ENCODE measurements at regions of chr4 and their contacts with region 1.

Region 1: DNA sequence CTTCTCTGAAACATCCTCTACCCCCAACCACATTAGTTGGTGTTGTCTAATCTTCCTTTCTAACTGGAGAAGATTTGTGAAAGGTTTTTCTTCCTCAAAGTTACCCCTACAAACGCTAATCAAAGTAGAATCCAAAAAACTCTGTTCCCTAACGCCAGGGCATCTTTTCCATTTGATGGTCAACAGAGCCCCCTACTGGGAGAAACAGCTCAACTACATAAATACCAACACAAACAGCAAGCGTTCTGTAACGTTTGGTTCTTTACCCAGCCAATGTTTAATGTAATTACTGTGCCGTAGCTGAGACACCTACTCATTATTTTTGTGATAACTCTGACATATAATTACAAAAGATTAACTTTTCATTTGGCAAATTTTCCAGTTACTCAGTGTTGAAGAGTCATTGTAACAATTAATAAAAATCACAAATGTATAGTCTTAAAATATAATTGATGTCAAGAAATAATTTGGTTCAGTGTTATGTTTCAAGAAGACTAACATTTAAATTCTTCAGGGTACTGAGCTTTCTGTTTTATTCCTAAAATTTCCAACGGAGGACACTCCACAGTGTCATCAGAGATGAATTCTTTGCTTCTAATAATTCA is 94.9 kb upstream of the TBC1D9 start:
- DNase-seq: peak; percentile 41
- ATAC-seq: peak; percentile 80; the same call in 1 of the 2 replicates
- H3K4me3 ChIP-seq: no peak overlapping the region
- H3K27ac ChIP-seq: no peak overlapping the region
- H3K4me1 ChIP-seq: no peaks in the 10 kb centered on the region
- H3K27me3 ChIP-seq: no peaks in the 10 kb centered on the region
- CTCF ChIP-seq: peak; percentile 64; the same call in 1 of the 2 replicates

Region 2: GRCh38 chr4:140359562-140360427 is 491.3 kb before region 1 on chr4:
- CTCF ChIA-PET with region 1: no interaction called
- POLR2A ChIA-PET with region 1: no interaction called
- in situ Hi-C with region 1: no loop called
- intact Hi-C with region 1: loop called (anchors 5 kb)
- DNase-seq: peak; percentile 63
- ATAC-seq: peak; percentile 99
- H3K4me3 ChIP-seq: no peak overlapping the region
- H3K27ac ChIP-seq: no peak overlapping the region
- H3K4me1 ChIP-seq: no peaks in the 10 kb centered on the region
- H3K27me3 ChIP-seq: no peaks in the 10 kb centered on the region
- CTCF ChIP-seq: peak; percentile 86

Region 3: DNA sequence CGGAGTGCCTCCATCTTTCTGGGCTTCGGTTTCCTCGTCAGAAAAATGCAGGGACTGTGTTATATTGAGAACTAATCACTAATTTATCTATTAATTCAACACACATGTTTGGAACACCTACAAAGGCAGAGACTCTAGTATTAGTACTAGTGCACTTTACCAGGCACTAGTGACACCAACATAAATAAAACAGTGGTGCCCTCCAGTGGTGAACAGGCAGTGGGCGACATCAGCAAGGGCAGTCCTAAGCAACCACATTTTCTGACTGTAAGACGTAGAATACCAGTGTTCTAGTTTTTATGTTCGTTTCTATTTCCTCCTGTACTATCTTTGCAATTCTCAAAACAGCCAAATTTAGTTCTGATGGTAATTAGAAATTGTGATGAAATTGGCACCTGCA is 213.3 kb before region 1 on chr4:
- CTCF ChIA-PET with region 1: no interaction called
- POLR2A ChIA-PET with region 1: no interaction called
- in situ Hi-C with region 1: no loop called
- intact Hi-C with region 1: loop called (anchors 10 kb)
- DNase-seq: no peak
- ATAC-seq: peak; percentile 79; the same call in 1 of the 2 replicates
- H3K4me3 ChIP-seq: no peak overlapping the region
- H3K27ac ChIP-seq: no peak overlapping the region
- H3K4me1 ChIP-seq: no peaks in the 10 kb centered on the region
- H3K27me3 ChIP-seq: no peaks in the 10 kb centered on the region
- CTCF ChIP-seq: peak; percentile 70

Measured in Panc1 (cell line).